Calu3 (cell line): ENCODE measurements at regions of chr2 and their contacts with region 1.

Region 1: DNA sequence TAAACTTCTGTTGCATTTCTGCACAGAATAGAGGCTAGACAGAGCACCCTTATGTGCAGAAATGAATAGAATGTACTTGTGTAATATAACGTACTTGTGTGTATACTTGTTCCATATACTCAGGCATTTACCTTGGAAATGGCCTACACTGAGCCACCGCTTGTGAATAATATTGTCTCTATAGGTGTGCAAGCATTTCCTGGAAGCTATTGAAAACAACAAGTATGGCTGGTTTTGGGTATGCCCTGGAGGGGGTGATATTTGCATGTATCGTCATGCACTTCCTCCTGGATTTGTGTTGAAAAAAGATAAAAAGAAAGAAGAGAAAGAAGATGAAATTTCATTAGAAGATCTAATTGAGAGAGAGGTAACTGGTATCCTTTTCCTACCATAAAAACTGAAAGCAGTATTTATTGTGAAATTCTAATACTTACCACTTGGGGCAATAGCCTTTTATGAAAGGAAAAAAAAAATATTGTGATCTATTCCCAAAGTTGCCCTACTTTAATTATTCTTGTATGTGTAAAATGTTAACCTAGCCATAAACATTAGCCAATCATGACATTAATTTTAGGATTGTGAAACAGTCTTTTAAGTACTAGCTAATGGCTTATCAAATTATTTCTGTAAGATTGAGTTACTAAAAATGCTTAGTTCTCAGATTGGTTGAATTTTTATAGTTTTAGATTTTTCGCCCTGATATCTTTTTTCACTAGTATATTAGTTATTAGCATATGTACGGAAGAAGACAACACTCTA is 18.0 kb downstream of the ZC3H15 start:
- DNase-seq: no peak
- H3K4me3 Mint-ChIP-seq: no peak overlapping the region
- H3K27ac Mint-ChIP-seq: no peak overlapping the region
- H3K4me1 Mint-ChIP-seq: peaks cover 12% of the 10 kb centered on the region
- H3K27me3 Mint-ChIP-seq: no peaks in the 10 kb centered on the region
- CTCF ChIP-seq: peak; percentile 63

Region 2: DNA sequence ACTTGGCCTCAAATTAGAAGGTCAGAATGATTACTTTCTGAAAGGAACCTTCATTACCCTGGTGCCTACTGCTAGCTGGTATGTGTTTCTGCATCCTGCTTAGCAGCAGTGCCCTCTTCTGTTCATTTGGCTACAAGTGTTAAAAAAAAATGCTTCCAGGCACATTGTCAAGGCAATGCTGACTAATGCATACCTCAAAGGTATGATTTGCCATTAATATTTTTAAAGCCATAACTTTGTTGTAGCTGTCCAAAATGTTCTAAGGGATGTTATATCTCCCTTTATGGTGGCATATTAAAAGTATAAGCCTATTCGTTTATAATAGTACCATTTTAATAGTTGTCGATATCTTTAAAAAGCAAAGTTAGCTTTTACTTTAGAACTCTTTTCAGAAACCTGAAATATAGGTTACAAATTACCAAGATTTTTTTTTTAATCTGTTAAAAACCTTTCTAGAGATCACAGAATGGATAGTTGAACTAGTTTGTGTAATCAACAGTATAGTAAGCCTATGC is 137.8 kb after region 1 on chr2:
- CTCF ChIA-PET with region 1: interaction called, 9 read pairs
- intact Hi-C with region 1: loop called (anchors 1 kb)
- DNase-seq: peak; percentile 51
- H3K4me3 Mint-ChIP-seq: no peak overlapping the region
- H3K27ac Mint-ChIP-seq: no peak overlapping the region
- H3K4me1 Mint-ChIP-seq: no peaks in the 10 kb centered on the region
- H3K27me3 Mint-ChIP-seq: no peaks in the 10 kb centered on the region
- CTCF ChIP-seq: peak; percentile 37